ENCODE measurements at regions of chr2 and their contacts with region 1.

Region 1: DNA sequence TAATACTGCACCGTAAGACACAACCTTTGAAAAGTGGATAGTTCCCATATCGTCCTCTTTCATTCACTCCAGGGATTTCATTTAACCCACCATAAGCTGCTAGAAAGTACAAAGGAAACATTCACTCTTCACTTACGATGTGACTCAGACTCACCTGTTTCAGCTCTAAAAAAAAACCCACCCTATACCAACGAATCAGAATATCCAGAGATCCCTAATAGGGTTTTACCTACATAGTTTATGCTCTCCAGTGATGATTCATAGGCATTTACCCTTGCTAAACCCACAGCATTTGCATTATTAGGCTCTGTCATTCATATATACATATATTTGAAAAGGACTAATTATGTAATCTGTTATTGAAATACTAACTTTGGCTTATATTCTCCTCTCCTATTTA is 60.2 kb downstream of the PRPF40A start:
- DNase-seq: no peak
- ATAC-seq: no peak
- H3K4me3 ChIP-seq: no peak overlapping the region
- H3K4me3 Mint-ChIP-seq: no peak overlapping the region
- H3K27ac ChIP-seq: no peak overlapping the region
- H3K27ac Mint-ChIP-seq: peak overlapping the region in 5 of 9 donors; percentile 10 to 70 (median 19)
- H3K4me1 ChIP-seq: no peaks in the 10 kb centered on the region
- H3K4me1 Mint-ChIP-seq: peaks cover 0 to 4% (median 0%) of the 10 kb centered on the region in 7 donors
- H3K27me3 ChIP-seq: no peaks in the 10 kb centered on the region
- H3K27me3 Mint-ChIP-seq: no peaks in the 10 kb centered on the region

Region 2: GRCh38 chr2:152676461-152676860 is 19.4 kb after region 1 on chr2:
- CTCF ChIA-PET with region 1: no interaction called
- POLR2A ChIA-PET with region 1: no interaction called
- intact Hi-C with region 1: loop called in 1 of 2 experiments (anchors 2 kb)
- DNase-seq: no peak
- ATAC-seq: no peak
- H3K4me3 ChIP-seq: no peak overlapping the region
- H3K4me3 Mint-ChIP-seq: no peak overlapping the region
- H3K27ac ChIP-seq: no peak overlapping the region
- H3K27ac Mint-ChIP-seq: no peak overlapping the region
- H3K4me1 ChIP-seq: no peaks in the 10 kb centered on the region
- H3K4me1 Mint-ChIP-seq: peaks cover 0 to 5% (median under 1%) of the 10 kb centered on the region in 7 donors
- H3K27me3 ChIP-seq: no peaks in the 10 kb centered on the region
- H3K27me3 Mint-ChIP-seq: no peaks in the 10 kb centered on the region

Region 3: DNA sequence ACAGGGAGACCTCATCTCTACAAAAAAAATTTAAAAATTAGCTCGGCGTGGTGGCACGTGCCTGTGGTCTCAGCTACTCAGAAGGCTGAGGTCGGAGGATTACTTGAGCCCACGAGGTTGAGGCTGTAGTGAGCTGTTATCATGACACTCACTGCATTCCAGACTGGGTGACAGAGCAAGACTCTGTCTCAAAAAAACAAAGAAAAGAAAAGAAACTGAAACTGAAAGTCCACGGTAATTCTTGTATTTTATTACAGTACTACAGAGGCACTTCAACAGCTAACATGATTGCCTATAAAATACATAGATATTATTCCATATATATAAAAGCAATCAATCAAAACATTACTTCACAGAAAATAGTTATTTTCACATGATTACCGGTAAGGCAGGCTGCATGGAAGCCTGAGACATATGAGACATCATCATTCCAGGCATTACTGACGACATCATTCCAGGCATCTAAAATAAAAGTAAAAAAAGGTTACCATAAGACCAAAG is 37.2 kb after region 1 on chr2:
- CTCF ChIA-PET with region 1: interaction called, 3 read pairs
- POLR2A ChIA-PET with region 1: no interaction called
- intact Hi-C with region 1: loop called in 1 of 2 experiments (anchors 5 kb)
- DNase-seq: peak in 5 of 9 donors; percentile 13 to 30 (median 21)
- ATAC-seq: peak; percentile 84
- H3K4me3 ChIP-seq: peak overlapping the region; percentile 34
- H3K4me3 Mint-ChIP-seq: peak overlapping the region; percentile 58 to 87 (median 82)
- H3K27ac ChIP-seq: peak overlapping the region; percentile 61
- H3K27ac Mint-ChIP-seq: peak overlapping the region; percentile 76 to 98 (median 88)
- H3K4me1 ChIP-seq: peaks cover 5 to 7% of the 10 kb centered on the region in 2 donors
- H3K4me1 Mint-ChIP-seq: peaks cover 14 to 52% (median 37%) of the 10 kb centered on the region in 7 donors
- H3K27me3 ChIP-seq: no peaks in the 10 kb centered on the region
- H3K27me3 Mint-ChIP-seq: no peaks in the 10 kb centered on the region

Measured in naive thymus-derived CD4-positive, alpha-beta T cell (primary cell).